Caco-2 (cell line): ENCODE measurements at regions of chr10 and their contacts with region 1.

Region 1: DNA sequence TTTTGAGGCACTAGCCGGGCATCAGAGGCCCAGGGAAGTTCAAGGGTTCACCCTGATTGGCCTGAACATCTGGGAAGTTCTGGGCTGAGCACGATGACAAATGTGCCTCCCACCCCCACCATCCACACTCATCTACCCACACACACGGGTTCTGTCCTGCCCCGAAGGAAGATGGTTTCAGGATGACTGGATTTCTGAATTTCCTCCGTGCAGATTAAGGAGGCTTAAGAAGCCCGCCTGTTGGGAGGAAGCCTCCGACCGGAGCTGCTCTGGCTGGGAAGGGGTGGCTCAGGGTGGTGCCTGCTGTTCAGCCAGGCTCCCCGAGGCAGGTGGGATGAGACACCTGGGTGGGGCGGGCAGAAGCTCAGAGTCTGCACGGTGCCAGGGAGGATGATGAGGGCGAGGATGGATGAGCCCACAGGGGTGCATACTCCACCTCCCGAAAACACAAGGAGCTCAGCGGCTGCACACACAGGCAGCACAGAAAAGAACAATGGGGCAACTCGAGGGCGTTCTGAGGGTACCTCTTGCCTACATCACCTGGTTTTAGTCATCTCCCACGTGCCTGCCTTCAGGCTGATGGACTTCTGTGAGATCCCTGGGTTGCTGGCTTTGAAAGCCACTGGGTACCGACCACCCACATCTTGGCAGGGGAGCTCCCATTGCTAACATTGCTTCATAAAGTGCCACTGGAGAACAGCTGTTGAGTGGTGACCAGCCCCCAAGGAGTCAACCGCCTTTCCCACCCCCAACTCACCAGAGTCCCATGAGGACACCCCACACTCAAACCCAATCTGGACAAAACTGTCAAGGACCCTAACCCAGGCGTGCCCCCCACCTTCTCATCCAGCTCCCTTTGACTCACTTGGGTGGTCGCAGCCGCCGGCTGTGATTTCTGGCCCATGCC is 41.2 kb downstream of the CALML3 start:
- DNase-seq: peak in 1 of 2 experiments; percentile 30
- H3K4me3 ChIP-seq: no peak overlapping the region
- H3K4me3 Mint-ChIP-seq: no peak overlapping the region
- H3K27ac Mint-ChIP-seq: peak overlapping the region; percentile 3
- H3K4me1 ChIP-seq: peaks cover 37% of the 10 kb centered on the region
- H3K4me1 Mint-ChIP-seq: peaks cover 43% of the 10 kb centered on the region
- H3K27me3 ChIP-seq: no peaks in the 10 kb centered on the region
- H3K27me3 Mint-ChIP-seq: no peaks in the 10 kb centered on the region
- CTCF ChIP-seq: no peak

Region 2: DNA sequence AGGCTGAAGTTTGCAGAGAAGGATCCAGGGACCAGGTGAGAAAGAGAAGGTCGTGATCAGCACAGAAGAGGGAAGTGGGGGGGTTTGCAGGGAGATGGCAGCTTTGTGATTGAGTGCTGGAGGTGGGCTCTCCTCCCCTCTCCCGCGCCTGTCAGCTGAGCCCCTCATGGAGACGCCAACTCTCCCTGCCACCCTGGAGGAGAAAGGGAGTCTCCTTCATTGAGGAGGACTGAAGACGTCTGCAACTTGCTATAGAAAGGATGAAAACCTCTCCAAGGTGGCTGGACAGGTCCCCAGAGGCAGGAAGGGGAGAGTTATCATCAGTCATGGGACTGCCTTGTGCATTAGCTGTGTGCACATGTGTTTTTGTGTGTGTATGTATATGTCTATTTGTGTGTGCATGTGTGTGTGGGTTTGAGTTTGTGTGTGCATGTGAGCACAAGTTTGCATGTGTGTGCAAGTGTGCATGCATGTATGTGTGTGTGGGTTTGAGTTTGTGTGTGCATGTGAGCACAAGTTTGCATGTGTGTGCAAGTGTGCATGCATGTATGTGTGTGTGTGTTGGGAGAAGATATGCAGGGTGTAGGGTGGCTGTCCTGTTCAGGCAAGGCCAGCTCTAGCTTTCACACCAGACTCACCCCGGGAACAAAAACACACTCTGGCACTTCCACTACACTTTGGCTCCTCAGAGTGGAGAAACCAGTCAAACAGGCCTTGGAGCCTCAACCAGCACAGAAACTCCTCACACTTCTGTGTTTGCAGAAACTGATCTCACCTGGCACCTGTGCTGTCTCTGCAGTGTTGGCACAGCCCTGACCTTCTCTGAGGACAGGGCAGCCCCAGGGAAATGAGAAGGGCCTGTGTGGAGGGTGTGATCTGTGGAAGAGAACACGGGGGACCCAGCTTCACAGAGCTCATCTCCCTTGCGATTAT is 62.8 kb before region 1 on chr10:
- CTCF ChIA-PET with region 1: no interaction called
- POLR2A ChIA-PET with region 1: no interaction called
- intact Hi-C with region 1: loop called (anchors 5 kb)
- DNase-seq: peak; percentile 83 to 84
- H3K4me3 ChIP-seq: no peak overlapping the region
- H3K4me3 Mint-ChIP-seq: peak overlapping the region; percentile 25
- H3K27ac Mint-ChIP-seq: peak overlapping the region; percentile 84
- H3K4me1 ChIP-seq: peaks cover 32% of the 10 kb centered on the region
- H3K4me1 Mint-ChIP-seq: peaks cover 38% of the 10 kb centered on the region
- H3K27me3 ChIP-seq: no peaks in the 10 kb centered on the region
- H3K27me3 Mint-ChIP-seq: no peaks in the 10 kb centered on the region
- CTCF ChIP-seq: no peak

Region 3: GRCh38 chr10:5548527-5549223 is 17.2 kb before region 1 on chr10:
- CTCF ChIA-PET with region 1: interaction called, 6 read pairs
- POLR2A ChIA-PET with region 1: no interaction called
- intact Hi-C with region 1: loop called (anchors 2 kb)
- DNase-seq: peak; percentile 77 to 90
- H3K4me3 ChIP-seq: no peak overlapping the region
- H3K4me3 Mint-ChIP-seq: no peak overlapping the region
- H3K27ac Mint-ChIP-seq: no peak overlapping the region
- H3K4me1 ChIP-seq: peaks cover 65% of the 10 kb centered on the region
- H3K4me1 Mint-ChIP-seq: peaks cover 21% of the 10 kb centered on the region
- H3K27me3 ChIP-seq: no peaks in the 10 kb centered on the region
- H3K27me3 Mint-ChIP-seq: no peaks in the 10 kb centered on the region
- CTCF ChIP-seq: no peak